B cell (primary cell): ENCODE measurements at regions of chr15 and their contacts with region 1.

Region 1: GRCh38 chr15:78108299-78109084 is 16.1 kb downstream of the SH2D7 start:
- DNase-seq: peak; percentile 87
- ATAC-seq: peak; percentile 92
- H3K4me3 ChIP-seq: no peak overlapping the region
- H3K4me3 Mint-ChIP-seq: no peak overlapping the region
- H3K27ac ChIP-seq: no peak overlapping the region
- H3K27ac Mint-ChIP-seq: no peak overlapping the region
- H3K4me1 ChIP-seq: peaks cover 4 to 8% of the 10 kb centered on the region in 2 donors
- H3K4me1 Mint-ChIP-seq: peaks cover 4% of the 10 kb centered on the region
- H3K27me3 ChIP-seq: no peaks in the 10 kb centered on the region
- H3K27me3 Mint-ChIP-seq: no peaks in the 10 kb centered on the region
- CTCF ChIP-seq: peak; percentile 87

Region 2: GRCh38 chr15:77889009-77889806 is 219.3 kb before region 1 on chr15:
- CTCF ChIA-PET with region 1: no interaction called
- POLR2A ChIA-PET with region 1: no interaction called
- intact Hi-C with region 1: no loop called
- DNase-seq: no peak
- ATAC-seq: no peak
- H3K4me3 ChIP-seq: no peak overlapping the region
- H3K4me3 Mint-ChIP-seq: no peak overlapping the region
- H3K27ac ChIP-seq: no peak overlapping the region
- H3K27ac Mint-ChIP-seq: no peak overlapping the region
- H3K4me1 ChIP-seq: peaks cover 4 to 13% of the 10 kb centered on the region in 2 donors
- H3K4me1 Mint-ChIP-seq: peaks cover 12% of the 10 kb centered on the region
- H3K27me3 ChIP-seq: peaks cover 0 to 5% (median 0%) of the 10 kb centered on the region in 4 experiments
- H3K27me3 Mint-ChIP-seq: peaks cover 7% of the 10 kb centered on the region
- CTCF ChIP-seq: no peak

Region 3: DNA sequence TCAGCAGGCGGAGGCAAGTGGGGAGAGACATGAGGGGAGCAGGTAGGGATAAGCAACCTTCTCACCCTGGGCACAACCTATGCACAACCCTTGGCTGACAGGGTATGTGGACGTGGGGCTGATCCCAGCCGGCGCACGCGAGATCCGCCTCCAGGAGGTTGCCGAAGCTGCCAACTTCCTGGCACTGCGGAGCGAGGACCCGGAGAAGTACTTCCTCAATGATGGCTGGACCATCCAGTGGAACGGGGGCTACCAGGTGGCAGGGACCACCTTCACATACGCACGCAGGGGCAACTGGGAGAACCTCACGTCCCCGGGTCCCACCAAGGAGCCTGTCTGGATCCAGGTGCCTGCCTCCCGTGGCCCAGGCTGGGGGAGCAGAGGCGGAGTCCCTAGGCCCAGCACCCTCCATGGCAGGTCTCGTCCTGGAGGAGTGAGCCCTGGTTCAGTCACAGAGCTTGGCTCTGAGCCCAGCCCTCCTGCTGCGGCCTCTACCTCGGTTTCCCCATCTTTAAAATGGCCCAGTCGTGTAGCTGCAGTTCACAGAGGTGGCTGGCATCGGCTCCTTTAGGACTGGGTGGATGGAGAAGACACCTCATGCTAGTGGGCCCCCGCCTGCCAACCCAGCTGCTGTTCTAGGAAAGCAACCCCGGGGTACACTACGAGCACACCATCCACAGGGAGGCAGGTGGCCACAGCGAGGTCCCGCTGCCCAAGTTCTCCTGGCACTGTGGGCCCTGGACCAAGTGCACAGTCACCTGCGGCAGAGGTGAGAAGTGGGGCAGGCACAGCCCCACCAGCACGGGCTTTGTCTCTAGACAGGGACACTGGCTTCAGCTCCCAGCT is 127.0 kb before region 1 on chr15:
- CTCF ChIA-PET with region 1: interaction called, 12 read pairs
- POLR2A ChIA-PET with region 1: no interaction called
- intact Hi-C with region 1: no loop called
- DNase-seq: no peak
- ATAC-seq: no peak
- H3K4me3 ChIP-seq: no peak overlapping the region
- H3K4me3 Mint-ChIP-seq: no peak overlapping the region
- H3K27ac ChIP-seq: no peak overlapping the region
- H3K27ac Mint-ChIP-seq: no peak overlapping the region
- H3K4me1 ChIP-seq: no peaks in the 10 kb centered on the region
- H3K4me1 Mint-ChIP-seq: no peaks in the 10 kb centered on the region
- H3K27me3 ChIP-seq: no peaks in the 10 kb centered on the region
- H3K27me3 Mint-ChIP-seq: peaks cover 8% of the 10 kb centered on the region
- CTCF ChIP-seq: no peak

Region 4: DNA sequence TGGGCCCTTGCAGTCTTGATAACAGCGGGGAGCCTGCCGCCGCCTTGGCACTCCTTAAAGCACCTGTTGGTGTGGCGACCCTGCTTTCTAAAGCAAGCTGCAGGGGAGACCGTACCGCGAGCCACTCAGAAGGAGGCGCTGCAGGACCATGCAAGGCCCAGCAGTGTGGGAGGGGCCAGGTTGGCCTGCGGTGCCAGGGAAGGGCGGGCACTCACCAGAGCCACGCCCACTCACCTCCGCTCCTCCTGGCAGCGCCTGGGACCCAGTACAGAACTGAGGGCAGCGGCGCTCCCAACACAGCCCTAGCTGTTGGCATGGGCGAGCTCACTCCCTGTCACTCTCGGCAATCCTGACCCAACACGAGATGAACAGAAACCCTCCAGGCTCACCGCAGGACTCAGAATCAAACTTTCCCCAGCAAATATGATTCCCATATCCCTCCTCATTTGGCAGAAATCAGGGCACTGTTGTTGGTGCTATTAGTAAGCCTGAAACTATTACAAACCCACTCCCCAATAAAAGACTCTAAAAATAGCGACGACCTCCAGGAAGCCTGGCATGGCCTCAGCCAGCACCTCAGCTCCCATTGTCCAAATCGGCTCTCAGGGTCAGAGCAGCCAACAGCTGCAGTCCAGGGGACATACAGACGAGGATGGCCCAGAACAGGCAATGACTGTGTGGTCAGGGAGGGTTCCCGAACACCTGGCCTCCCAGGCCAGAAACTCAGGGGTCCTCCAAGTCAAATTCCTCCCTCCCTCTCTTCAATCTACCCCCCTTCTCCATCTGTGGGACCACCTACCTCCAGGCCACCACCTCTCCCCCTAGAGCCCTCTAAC is 108.2 kb before region 1 on chr15:
- CTCF ChIA-PET with region 1: interaction called, 99 read pairs
- POLR2A ChIA-PET with region 1: interaction called, 5 read pairs
- intact Hi-C with region 1: loop called (anchors 1 kb)
- DNase-seq: peak; percentile 71
- ATAC-seq: peak; percentile 98
- H3K4me3 ChIP-seq: no peak overlapping the region
- H3K4me3 Mint-ChIP-seq: no peak overlapping the region
- H3K27ac ChIP-seq: no peak overlapping the region
- H3K27ac Mint-ChIP-seq: peak overlapping the region; percentile 80
- H3K4me1 ChIP-seq: no peaks in the 10 kb centered on the region
- H3K4me1 Mint-ChIP-seq: peaks cover 3% of the 10 kb centered on the region
- H3K27me3 ChIP-seq: no peaks in the 10 kb centered on the region
- H3K27me3 Mint-ChIP-seq: no peaks in the 10 kb centered on the region
- CTCF ChIP-seq: peak; percentile 68

Region 5: DNA sequence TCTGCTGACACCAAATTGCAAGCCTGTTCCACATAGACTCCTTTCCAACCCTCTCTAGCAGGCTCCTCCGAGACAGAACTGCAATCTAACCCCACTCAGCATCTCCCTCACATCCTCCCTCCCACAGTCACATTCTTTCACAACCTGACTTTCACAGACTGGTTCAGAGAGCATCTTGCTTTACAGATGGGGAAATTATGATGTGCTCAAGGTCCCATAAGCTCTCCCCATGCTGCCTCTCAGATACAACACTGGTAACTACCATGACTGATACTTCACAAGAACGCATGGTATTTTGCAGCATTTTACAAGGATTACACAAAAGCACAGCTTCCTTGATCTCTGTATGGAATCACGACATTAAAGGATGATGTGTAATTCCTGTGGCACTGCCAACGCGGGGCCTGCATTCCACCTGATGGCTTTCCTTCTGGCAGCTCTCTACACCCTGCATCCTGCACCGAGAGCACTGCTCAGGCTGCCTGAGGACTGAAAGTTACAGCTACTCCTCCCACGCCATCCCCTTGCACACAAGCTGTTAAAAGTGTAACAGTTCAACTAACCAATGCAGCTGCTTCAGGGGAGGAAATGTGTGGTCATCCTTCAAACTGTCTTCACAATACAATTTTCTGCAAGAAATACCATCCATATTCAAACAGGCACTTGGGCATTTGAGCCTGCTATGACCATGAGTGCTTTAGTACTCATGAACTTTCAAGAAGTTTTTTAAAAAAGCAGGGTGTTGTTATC is 58.6 kb before region 1 on chr15:
- CTCF ChIA-PET with region 1: interaction called, 13 read pairs
- POLR2A ChIA-PET with region 1: no interaction called
- intact Hi-C with region 1: no loop called
- DNase-seq: no peak
- ATAC-seq: peak; percentile 31
- H3K4me3 ChIP-seq: no peak overlapping the region
- H3K4me3 Mint-ChIP-seq: peak overlapping the region; percentile 33
- H3K27ac ChIP-seq: no peak overlapping the region
- H3K27ac Mint-ChIP-seq: peak overlapping the region; percentile 78
- H3K4me1 ChIP-seq: peaks cover 29 to 33% of the 10 kb centered on the region in 2 donors
- H3K4me1 Mint-ChIP-seq: peaks cover 54% of the 10 kb centered on the region
- H3K27me3 ChIP-seq: no peaks in the 10 kb centered on the region
- H3K27me3 Mint-ChIP-seq: no peaks in the 10 kb centered on the region
- CTCF ChIP-seq: no peak

Region 6: GRCh38 chr15:78087951-78088772 is 20.3 kb before region 1 on chr15:
- CTCF ChIA-PET with region 1: interaction called, 49 read pairs
- POLR2A ChIA-PET with region 1: no interaction called
- intact Hi-C with region 1: no loop called
- DNase-seq: peak; percentile 58
- ATAC-seq: peak; percentile 95
- H3K4me3 ChIP-seq: no peak overlapping the region
- H3K4me3 Mint-ChIP-seq: peak overlapping the region; percentile 18
- H3K27ac ChIP-seq: no peak overlapping the region
- H3K27ac Mint-ChIP-seq: peak overlapping the region; percentile 46
- H3K4me1 ChIP-seq: peaks cover 9% of the 10 kb centered on the region in 2 donors
- H3K4me1 Mint-ChIP-seq: peaks cover 14% of the 10 kb centered on the region
- H3K27me3 ChIP-seq: no peaks in the 10 kb centered on the region
- H3K27me3 Mint-ChIP-seq: peaks cover 8% of the 10 kb centered on the region
- CTCF ChIP-seq: no peak

Region 7: DNA sequence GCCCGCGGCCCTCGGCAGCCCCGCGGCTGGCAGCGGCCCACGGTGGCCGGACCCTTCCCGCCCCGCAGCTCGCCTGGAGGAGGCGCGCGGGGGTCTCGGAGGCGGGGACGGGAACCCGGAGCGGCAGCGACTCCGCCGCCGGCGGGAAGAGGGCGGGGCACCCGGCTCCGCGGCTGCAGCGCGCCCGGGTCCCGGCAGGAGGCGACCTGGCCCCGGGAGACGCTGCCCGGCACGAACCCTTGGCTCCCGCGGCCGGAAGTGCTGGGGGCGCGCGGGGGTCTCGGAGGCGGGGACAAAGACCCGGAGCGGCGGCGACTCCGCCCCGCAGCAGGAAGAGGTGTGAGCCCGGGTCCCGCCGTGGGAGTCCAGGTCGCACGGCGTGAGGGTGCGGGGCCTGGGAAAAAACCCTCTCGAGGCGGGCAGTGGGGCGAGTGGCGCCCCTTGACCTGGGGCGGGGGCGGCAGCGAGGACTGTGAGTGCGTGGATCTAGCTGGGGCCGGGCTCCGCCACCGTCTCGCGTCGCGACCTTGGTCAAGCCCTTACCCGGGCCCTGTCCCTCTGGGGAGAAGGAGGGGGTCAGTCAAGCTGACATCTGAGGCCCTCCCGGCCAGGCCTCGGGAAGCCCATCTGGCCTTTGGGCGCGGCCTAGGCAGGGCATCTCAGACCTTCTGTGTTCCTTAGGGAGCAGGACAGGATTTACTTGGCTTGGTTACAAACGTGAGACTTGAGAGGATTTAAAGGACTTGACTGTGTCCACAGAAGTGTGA is 23.0 kb after region 1 on chr15 and contains the start of gene CIB2:
- CTCF ChIA-PET with region 1: interaction called, 56 read pairs
- POLR2A ChIA-PET with region 1: no interaction called
- intact Hi-C with region 1: loop called (anchors 1 kb)
- DNase-seq: peak; percentile 86
- ATAC-seq: peak; percentile 94
- H3K4me3 ChIP-seq: peak within 1 kb of the TSS; percentile 43 to 77 (median 72)
- H3K4me3 Mint-ChIP-seq: peak within 1 kb of the TSS; percentile 89
- H3K27ac ChIP-seq: peak within 1 kb of the TSS; percentile 69 to 86
- H3K27ac Mint-ChIP-seq: peak within 1 kb of the TSS; percentile 88
- H3K4me1 ChIP-seq: peaks cover 12 to 14% of the 10 kb centered on the region in 2 donors
- H3K4me1 Mint-ChIP-seq: peaks cover 14% of the 10 kb centered on the region
- H3K27me3 ChIP-seq: no peaks in the 10 kb centered on the region
- H3K27me3 Mint-ChIP-seq: no peaks in the 10 kb centered on the region
- CTCF ChIP-seq: peak; percentile 83
- total RNA-seq, gene CIB2: 3.2 and 3.8 TPM in 2 replicates

Region 8: GRCh38 chr15:78422571-78423340 is 314.3 kb after region 1 on chr15:
- CTCF ChIA-PET with region 1: interaction called, 14 read pairs
- POLR2A ChIA-PET with region 1: no interaction called
- intact Hi-C with region 1: loop called (anchors 1 kb)
- DNase-seq: peak; percentile 71
- ATAC-seq: peak; percentile 80
- H3K4me3 ChIP-seq: no peak overlapping the region
- H3K4me3 Mint-ChIP-seq: no peak overlapping the region
- H3K27ac ChIP-seq: no peak overlapping the region
- H3K27ac Mint-ChIP-seq: no peak overlapping the region
- H3K4me1 ChIP-seq: no peaks in the 10 kb centered on the region
- H3K4me1 Mint-ChIP-seq: peaks cover 2% of the 10 kb centered on the region
- H3K27me3 ChIP-seq: peaks cover 0 to 5% (median 0%) of the 10 kb centered on the region in 4 experiments
- H3K27me3 Mint-ChIP-seq: peaks cover 34% of the 10 kb centered on the region
- CTCF ChIP-seq: peak; percentile 96

Region 9: GRCh38 chr15:78859971-78860732 is 751.7 kb after region 1 on chr15:
- CTCF ChIA-PET with region 1: no interaction called
- POLR2A ChIA-PET with region 1: no interaction called
- intact Hi-C with region 1: no loop called
- DNase-seq: peak; percentile 82
- ATAC-seq: peak; percentile 81
- H3K4me3 ChIP-seq: peak overlapping the region; percentile 25 to 81 (median 53)
- H3K4me3 Mint-ChIP-seq: peak overlapping the region; percentile 81
- H3K27ac ChIP-seq: no peak overlapping the region
- H3K27ac Mint-ChIP-seq: peak overlapping the region; percentile 92
- H3K4me1 ChIP-seq: peaks cover 3 to 7% of the 10 kb centered on the region in 2 donors
- H3K4me1 Mint-ChIP-seq: peaks cover 7% of the 10 kb centered on the region
- H3K27me3 ChIP-seq: no peaks in the 10 kb centered on the region
- H3K27me3 Mint-ChIP-seq: no peaks in the 10 kb centered on the region
- CTCF ChIP-seq: peak; percentile 77